Activated CD8-positive, alpha-beta memory T cell treated with anti-CD3 and anti-CD28 coated beads, Interleukin-2, amount 10 ng/mL, durations not matched to agents 7 days and 5 days (primary cell): ENCODE measurements at regions of chr4 and their contacts with region 1.

Region 1: GRCh38 chr4:121199742-121200561 is 35.8 kb upstream of the TNIP3 start:
- DNase-seq: peak; percentile 82
- ATAC-seq: peak; percentile 92
- H3K4me3 Mint-ChIP-seq: peak overlapping the region; percentile 60
- H3K27ac Mint-ChIP-seq: peak overlapping the region; percentile 88
- H3K4me1 Mint-ChIP-seq: peaks cover 56% of the 10 kb centered on the region
- H3K27me3 Mint-ChIP-seq: no peaks in the 10 kb centered on the region

Region 2: GRCh38 chr4:121212806-121213205 is 12.9 kb after region 1 on chr4:
- CTCF ChIA-PET with region 1: interaction called, 24 read pairs
- DNase-seq: no peak
- ATAC-seq: no peak
- H3K4me3 Mint-ChIP-seq: peak overlapping the region; percentile 28
- H3K27ac Mint-ChIP-seq: peak overlapping the region; percentile 67
- H3K4me1 Mint-ChIP-seq: peaks cover 72% of the 10 kb centered on the region
- H3K27me3 Mint-ChIP-seq: no peaks in the 10 kb centered on the region

Region 3: DNA sequence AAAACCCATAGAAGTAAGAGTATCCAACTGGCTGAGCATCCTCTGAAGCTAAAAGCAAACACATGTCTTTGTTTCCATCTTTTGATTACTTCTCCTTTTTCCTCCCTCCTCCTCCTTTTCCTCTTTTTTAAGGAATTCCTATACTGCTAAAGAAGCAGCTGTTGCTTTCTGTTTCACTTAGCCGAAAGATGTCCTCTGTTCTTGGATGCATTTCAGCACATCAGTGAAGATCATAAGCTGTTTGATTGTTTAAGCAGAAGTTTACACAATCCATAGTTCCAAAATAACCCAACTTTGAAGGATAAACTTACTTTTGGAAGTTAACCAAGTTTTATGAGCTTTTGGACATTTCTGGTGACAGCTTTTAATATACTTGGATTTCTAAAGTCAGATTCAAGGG is 19.3 kb after region 1 on chr4:
- CTCF ChIA-PET with region 1: interaction called, 57 read pairs
- DNase-seq: no peak
- ATAC-seq: peak; percentile 18
- H3K4me3 Mint-ChIP-seq: peak overlapping the region; percentile 68
- H3K27ac Mint-ChIP-seq: peak overlapping the region; percentile 92
- H3K4me1 Mint-ChIP-seq: peaks cover 68% of the 10 kb centered on the region
- H3K27me3 Mint-ChIP-seq: no peaks in the 10 kb centered on the region

Region 4: DNA sequence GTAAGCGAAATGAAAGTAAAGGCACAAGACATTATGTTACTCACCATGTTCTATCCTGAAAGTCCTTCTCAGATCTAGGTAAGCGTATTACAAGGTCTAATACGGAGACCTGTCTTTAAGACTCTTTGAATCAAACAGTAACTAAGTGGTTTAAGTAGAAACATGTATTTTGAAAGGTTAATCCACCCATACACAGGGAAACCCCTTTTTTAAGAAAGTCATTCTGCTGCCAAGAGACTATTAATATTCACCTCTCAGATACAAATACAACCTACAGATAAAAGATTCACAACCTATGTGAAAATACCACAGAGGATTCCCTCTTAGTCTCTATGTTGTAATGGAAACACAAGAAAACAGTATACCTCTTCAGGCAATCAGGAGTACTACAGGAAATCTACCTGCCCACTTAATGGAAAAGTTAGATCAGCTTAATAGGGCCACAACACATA is 27.4 kb after region 1 on chr4:
- CTCF ChIA-PET with region 1: interaction called, 57 read pairs
- DNase-seq: no peak
- ATAC-seq: peak; percentile 69
- H3K4me3 Mint-ChIP-seq: peak overlapping the region; percentile 80
- H3K27ac Mint-ChIP-seq: peak overlapping the region; percentile 99
- H3K4me1 Mint-ChIP-seq: peaks cover 44% of the 10 kb centered on the region
- H3K27me3 Mint-ChIP-seq: no peaks in the 10 kb centered on the region

Region 5: GRCh38 chr4:121252224-121252806 is 52.4 kb after region 1 on chr4:
- CTCF ChIA-PET with region 1: interaction called, 32 read pairs
- DNase-seq: peak; percentile 77
- ATAC-seq: no peak
- H3K4me3 Mint-ChIP-seq: no peak overlapping the region
- H3K27ac Mint-ChIP-seq: peak overlapping the region; percentile 71
- H3K4me1 Mint-ChIP-seq: peaks cover 75% of the 10 kb centered on the region
- H3K27me3 Mint-ChIP-seq: no peaks in the 10 kb centered on the region

Region 6: DNA sequence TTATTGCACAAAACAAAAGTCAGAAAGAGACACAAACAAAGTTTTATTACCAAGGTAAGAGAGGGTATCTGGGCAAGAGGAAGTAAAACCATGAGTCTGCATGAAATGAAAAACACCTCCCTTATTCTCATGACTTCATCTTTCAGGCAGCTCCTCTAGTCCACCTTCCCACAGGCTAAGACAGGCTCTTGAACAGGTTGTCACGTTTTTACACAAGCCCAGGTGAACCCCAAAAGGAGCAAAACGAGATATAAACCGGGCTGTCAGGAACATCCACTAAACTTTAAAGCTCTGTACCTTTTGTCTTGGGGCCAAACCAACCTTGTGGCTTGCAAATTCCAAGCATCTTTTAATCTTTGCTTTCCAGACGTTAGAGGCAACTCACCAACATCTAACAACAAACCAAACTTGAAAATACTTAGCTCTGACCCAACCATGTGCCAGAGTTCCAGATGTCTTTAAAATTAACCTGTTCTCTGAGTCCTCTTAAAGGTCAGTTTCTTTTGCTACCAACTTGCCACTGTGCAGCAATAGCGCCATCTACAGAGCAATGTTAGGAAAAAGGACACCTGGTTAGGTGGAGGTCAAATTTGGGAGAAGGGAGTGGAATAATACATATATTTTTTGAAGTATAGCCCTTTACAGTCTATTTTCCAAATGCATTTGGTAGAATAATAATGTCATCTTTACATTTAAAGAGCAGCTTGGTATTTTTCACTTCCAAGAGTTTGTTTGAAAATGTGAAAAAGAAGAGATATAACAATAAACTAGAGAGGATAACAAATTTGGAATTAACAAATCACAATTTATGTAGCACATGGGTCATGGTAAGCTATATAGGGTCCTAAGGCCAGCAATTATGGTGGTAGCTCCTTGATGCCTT is 107.7 kb after region 1 on chr4:
- CTCF ChIA-PET with region 1: interaction called, 40 read pairs
- DNase-seq: peak; percentile 74
- ATAC-seq: peak; percentile 83
- H3K4me3 Mint-ChIP-seq: peak overlapping the region; percentile 27
- H3K27ac Mint-ChIP-seq: peak overlapping the region; percentile 86
- H3K4me1 Mint-ChIP-seq: peaks cover 27% of the 10 kb centered on the region
- H3K27me3 Mint-ChIP-seq: peaks cover 2% of the 10 kb centered on the region